Endothelial cell of umbilical vein (primary cell): ENCODE measurements at regions of chr1 and their contacts with region 1.

Region 1: GRCh38 chr1:59699227-59699847 is 115.4 kb upstream of the HOOK1 start:
- DNase-seq: peak; percentile 62
- H3K4me3 ChIP-seq: no peak overlapping the region
- H3K27ac ChIP-seq: no peak overlapping the region
- H3K4me1 ChIP-seq: peaks cover 4% of the 10 kb centered on the region
- H3K27me3 ChIP-seq: no peaks in the 10 kb centered on the region
- CTCF ChIP-seq: peak; percentile 72 to 78
- POLR2A ChIP-seq: no peak

Region 2: DNA sequence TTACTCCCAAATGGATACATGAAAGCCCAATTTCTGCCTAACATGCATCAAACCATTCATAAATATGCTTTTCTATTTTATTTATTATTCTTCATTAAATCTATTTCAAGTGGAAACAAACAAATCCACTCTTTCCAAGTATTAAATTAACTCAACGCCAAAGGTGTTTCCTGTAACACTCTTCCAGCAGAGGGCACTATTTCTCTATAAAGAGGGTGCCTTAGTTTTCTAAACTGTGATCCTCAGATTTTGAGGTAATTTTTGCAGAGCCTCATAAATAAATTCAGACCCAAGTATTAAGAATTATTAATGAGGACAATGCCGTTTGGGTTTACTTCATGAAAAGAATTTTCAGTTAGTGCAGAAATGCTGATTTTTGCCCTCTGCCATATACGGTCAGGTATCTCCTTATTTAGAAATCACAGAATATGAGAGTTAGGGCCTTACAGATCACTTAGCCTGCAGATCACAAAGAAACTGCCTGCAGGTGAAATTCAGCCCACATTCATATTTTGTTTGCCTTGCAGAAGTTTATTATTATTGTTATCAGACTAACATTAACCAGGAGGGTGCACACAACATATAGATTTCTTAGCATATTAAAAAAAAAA is 959.4 kb before region 1 on chr1:
- CTCF ChIA-PET with region 1: interaction called, 9 read pairs
- POLR2A ChIA-PET with region 1: no interaction called
- dilution Hi-C with region 1: no loop called
- intact Hi-C with region 1: loop called (anchors 1 kb)
- DNase-seq: peak; percentile 73
- H3K4me3 ChIP-seq: no peak overlapping the region
- H3K27ac ChIP-seq: no peak overlapping the region
- H3K4me1 ChIP-seq: peaks cover 3% of the 10 kb centered on the region
- H3K27me3 ChIP-seq: no peaks in the 10 kb centered on the region
- CTCF ChIP-seq: peak; percentile 31 to 38
- POLR2A ChIP-seq: no peak

Region 3: DNA sequence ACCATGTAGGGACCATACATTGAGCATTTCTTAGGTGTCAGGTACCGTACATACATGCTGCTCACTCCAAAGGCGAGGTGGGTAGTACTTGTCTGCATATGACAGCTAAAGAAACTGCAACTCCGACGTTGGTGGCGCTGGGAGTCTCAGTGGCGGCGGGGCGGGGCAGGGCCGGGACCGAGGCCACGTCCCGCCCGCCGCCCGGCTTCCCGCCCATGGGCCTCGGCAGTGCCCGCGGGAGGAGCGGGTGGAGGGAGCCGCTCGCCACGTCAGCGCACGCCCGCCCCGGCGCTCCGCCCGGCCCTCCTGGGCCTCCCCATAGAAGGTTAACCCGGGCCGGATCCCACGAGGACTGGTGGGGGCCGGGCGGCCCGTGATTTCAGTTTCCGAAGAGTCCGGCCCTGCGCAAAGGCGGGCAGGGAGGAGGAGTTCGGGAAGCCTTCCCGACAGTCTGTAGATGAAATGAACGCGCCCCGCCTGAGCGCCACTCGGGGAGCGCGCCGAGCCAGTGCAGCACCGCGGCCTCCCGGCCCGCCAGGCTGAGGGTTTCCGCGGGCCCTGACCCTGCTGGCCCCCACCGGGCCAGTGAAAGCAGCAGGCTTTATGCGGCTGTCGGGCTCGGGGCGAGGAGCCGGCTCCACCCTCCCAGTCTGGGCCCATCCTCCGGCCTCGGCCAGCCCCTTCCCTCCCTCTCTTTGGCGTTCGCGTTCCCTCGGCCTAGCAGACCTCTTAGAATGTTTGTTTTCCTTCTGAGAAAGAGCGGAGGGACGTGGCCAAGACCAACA is 795.6 kb before region 1 on chr1:
- CTCF ChIA-PET with region 1: interaction called, 4 read pairs
- POLR2A ChIA-PET with region 1: no interaction called
- dilution Hi-C with region 1: no loop called
- intact Hi-C with region 1: loop called (anchors 1 kb)
- DNase-seq: peak; percentile 94
- H3K4me3 ChIP-seq: peak overlapping the region in 2 of 3 experiments; percentile 24 to 41
- H3K27ac ChIP-seq: peak overlapping the region; percentile 64
- H3K4me1 ChIP-seq: peaks cover 46% of the 10 kb centered on the region
- H3K27me3 ChIP-seq: no peaks in the 10 kb centered on the region
- CTCF ChIP-seq: no peak
- POLR2A ChIP-seq: peak; percentile 95

Region 4: DNA sequence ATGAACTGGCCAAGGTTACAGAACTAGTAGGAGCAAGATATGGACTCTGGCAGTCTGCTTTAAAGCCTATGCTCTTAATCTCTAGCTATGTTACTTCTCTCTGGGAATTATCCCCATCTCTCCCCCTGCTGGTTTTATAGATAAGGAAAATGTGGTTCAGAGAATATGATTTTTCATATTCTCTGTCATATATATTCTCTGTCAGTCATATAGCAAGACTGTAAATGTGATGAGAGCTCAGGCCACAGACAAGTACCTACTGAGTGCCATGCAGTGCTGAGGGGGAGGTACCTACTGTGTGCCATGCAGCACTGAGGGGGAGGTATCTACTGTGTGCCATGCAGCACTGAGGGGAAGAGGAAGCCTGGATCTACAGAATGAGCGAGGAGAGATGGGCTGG is 622.7 kb before region 1 on chr1:
- CTCF ChIA-PET with region 1: interaction called, 17 read pairs
- POLR2A ChIA-PET with region 1: no interaction called
- dilution Hi-C with region 1: no loop called
- intact Hi-C with region 1: loop called (anchors 1 kb)
- DNase-seq: peak; percentile 60
- H3K4me3 ChIP-seq: no peak overlapping the region
- H3K27ac ChIP-seq: no peak overlapping the region
- H3K4me1 ChIP-seq: peaks cover 13% of the 10 kb centered on the region
- H3K27me3 ChIP-seq: no peaks in the 10 kb centered on the region
- CTCF ChIP-seq: peak in 1 of 2 donors; percentile 16
- POLR2A ChIP-seq: no peak

Region 5: DNA sequence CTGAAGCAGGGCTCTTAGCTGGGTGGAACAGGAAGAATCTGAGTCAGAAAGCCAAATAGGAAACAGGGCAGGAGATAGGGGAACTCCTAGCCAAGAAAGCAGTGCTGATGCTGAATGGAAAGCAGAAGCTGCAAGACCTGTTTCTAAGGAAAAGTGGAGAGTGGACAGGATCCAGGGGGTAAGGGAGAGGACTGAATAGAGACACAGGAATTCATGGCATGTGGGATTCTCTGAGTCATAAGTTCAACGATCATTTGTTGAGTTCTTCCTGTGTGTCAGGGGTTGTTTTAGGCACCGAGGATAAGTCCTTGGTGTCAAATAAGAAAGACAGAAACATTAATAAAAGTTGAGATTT is 556.2 kb before region 1 on chr1:
- CTCF ChIA-PET with region 1: interaction called, 5 read pairs
- POLR2A ChIA-PET with region 1: no interaction called
- dilution Hi-C with region 1: no loop called
- intact Hi-C with region 1: loop called (anchors 2 kb)
- DNase-seq: peak; percentile 91
- H3K4me3 ChIP-seq: no peak overlapping the region
- H3K27ac ChIP-seq: peak overlapping the region; percentile 82
- H3K4me1 ChIP-seq: peaks cover 43% of the 10 kb centered on the region
- H3K27me3 ChIP-seq: no peaks in the 10 kb centered on the region
- CTCF ChIP-seq: no peak
- POLR2A ChIP-seq: peak; percentile 45

Region 6: DNA sequence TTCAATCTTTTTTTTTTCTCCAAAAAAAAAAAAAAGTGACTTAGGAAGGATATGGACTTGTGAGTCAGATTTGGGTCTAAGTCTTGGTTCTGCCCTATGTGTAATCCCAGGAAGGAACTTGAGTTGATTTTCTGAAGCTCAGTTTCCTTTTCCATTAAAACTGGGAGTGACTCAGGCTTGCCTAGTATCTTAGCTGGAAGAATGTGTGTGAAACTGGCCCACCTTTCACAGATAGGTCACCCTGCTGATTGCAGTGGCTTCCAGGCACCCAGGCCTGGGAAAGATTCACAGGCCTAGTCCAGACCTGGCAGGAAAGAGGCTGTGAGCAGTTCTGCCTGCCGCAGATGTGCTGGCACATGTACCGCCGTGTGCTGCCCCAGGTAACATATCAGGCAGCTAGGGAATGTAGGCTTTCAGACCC is 102.9 kb before region 1 on chr1:
- CTCF ChIA-PET with region 1: interaction called, 20 read pairs
- POLR2A ChIA-PET with region 1: no interaction called
- dilution Hi-C with region 1: no loop called
- intact Hi-C with region 1: loop called (anchors 2 kb)
- DNase-seq: peak; percentile 98
- H3K4me3 ChIP-seq: no peak overlapping the region
- H3K27ac ChIP-seq: peak overlapping the region; percentile 83
- H3K4me1 ChIP-seq: peaks cover 29% of the 10 kb centered on the region
- H3K27me3 ChIP-seq: no peaks in the 10 kb centered on the region
- CTCF ChIP-seq: no peak
- POLR2A ChIP-seq: no peak

Region 7: GRCh38 chr1:59750328-59751003 is 51.1 kb after region 1 on chr1:
- CTCF ChIA-PET with region 1: interaction called, 15 read pairs
- POLR2A ChIA-PET with region 1: no interaction called
- dilution Hi-C with region 1: no loop called
- intact Hi-C with region 1: no loop called
- DNase-seq: peak; percentile 97
- H3K4me3 ChIP-seq: peak overlapping the region in 1 of 3 experiments; percentile 19
- H3K27ac ChIP-seq: peak overlapping the region; percentile 87
- H3K4me1 ChIP-seq: peaks cover 30% of the 10 kb centered on the region
- H3K27me3 ChIP-seq: no peaks in the 10 kb centered on the region
- CTCF ChIP-seq: no peak
- POLR2A ChIP-seq: no peak

Region 8: DNA sequence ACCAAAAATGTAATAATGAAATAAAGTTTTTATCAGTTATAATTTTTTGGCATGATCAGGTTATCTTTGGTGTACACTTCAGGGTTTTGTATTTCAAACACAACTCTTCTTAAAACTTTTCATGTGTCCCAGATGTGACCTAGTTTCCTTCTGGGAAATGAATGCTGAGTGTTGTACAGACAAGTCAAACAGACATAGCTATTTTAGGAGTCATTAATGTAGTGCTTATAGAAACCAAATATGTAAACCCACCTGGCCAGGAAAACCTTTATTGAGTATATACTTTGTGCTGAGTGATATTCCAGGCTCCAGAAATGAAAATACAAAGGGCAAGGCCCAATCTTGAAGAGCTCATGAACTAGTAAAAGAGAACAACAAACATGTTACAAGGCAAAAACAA is 89.5 kb after region 1 on chr1:
- CTCF ChIA-PET with region 1: no interaction called
- POLR2A ChIA-PET with region 1: no interaction called
- dilution Hi-C with region 1: no loop called
- intact Hi-C with region 1: no loop called
- DNase-seq: no peak
- H3K4me3 ChIP-seq: no peak overlapping the region
- H3K27ac ChIP-seq: no peak overlapping the region
- H3K4me1 ChIP-seq: no peaks in the 10 kb centered on the region
- H3K27me3 ChIP-seq: no peaks in the 10 kb centered on the region
- CTCF ChIP-seq: no peak
- POLR2A ChIP-seq: no peak